ENCODE measurements at regions of chr10 and their contacts with region 1.

Region 1: DNA sequence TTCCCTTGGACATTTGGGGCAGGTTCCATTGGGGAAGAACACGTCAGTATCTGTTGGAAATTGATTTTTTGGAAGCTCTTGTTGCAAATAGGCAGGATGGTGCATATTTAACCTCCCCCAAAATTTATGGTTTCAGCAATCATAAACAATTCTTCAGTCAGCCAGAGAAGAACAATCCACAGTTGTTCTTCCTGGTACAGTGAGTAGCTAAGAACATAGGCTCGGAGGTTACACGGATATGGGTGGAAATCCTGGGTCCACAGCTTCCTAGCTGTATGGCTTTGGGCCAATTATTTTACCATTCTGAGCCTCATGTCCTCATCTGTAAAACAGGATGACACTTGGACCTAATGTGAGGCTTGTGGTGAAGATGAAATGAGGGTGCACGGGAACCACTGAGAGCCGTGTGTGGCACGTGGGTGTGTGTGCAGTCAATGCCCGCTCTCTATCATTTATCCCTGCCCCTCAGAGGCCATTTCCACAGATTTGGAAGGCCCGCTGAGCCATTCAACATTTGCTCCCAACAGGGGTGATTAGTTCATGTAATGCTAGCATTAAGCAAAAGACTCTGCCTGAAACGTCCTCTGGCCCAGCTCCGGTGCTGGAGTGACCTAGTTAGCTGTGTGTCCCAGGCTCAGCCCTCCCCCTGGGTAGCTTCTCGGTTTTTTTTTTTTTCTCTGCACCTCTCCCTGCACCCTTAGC is 9.7 kb downstream of the CAMK1D start:
- DNase-seq: peak; percentile 41
- ATAC-seq: peak; percentile 64 to 71

Region 2: GRCh38 chr10:12390733-12391132 is 31.7 kb after region 1 on chr10:
- intact Hi-C with region 1: loop called in 1 of 2 experiments (anchors 5 kb)
- DNase-seq: peak; percentile 55
- ATAC-seq: peak; percentile 70 to 83

Region 3: DNA sequence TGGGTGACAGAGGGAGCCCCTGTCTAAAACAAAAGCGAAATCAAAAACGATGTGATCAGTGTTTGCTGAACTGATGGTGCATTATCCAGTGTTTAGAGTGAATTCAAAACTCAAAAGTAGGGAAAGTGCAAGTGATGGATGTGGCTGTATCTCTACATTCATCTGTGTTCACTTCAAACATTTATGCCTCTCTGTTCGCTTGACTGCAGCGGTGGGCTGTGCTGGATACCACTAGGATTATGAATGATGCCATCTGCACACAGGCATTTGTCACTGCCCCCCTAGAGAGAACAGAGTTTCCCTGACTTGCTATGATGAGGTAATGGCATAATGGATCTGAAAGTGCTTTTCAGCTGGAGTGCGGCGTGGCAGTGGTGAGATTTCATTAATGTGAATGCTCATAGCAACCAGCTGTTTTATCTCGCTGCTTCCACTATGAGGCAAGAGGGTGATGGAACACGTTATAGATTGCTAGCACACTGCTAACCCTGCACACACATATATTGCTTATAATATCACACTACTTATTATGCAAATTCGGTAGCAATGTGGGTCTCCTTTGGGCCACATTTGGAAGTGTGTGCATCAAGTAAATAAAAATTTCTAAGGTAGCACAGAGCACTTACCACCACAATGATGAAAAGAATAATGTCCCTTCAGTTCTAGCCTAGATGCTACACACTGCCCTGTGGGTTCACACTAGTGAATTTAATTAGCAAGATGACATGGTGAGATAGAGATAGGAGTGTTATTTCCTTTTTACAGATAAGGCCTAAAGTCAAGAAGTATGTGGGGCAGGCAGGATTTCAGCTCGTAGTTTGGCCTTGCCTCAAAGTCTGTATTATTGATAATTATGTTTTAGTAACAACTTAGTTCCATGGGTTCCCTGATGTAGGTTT is 155.0 kb after region 1 on chr10:
- intact Hi-C with region 1: no loop called
- DNase-seq: no peak
- ATAC-seq: peak in 1 of 2 donors; percentile 25